ENCODE measurements at regions of chr19 and their contacts with region 1.

Region 1: DNA sequence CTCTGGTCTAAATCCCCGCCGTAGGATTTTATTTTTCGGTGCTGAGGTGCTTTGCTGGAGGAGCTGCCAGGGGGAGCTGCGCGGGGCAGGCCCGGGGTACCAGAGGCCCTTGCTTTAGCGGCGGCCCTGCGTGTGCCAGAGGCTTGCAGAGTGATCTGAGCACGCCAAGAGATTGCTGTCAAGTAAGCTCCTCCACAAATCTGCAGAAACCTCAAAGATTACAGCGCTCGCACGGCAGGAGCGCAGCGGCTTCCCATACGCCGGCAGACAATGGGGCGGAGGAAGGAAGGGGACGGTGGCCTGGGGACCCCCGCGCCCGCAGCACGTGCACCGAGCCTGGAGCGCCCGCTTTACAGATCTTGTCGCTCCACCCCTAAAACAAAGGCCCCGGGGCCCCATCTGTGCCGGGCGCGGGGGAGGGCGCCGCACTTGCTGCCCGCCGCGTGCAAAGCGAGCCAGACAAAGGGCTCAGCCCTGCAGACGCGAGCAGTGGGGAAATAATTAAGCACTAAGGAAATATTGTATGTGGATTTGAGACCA is 9.1 kb upstream of the C19orf12 start:
- H3K4me3 ChIP-seq: no peak overlapping the region
- H3K27ac ChIP-seq: no peak overlapping the region
- H3K4me1 ChIP-seq: no peaks in the 10 kb centered on the region; the same call in 1 of the 2 replicates
- CTCF ChIP-seq: no peak

Region 2: DNA sequence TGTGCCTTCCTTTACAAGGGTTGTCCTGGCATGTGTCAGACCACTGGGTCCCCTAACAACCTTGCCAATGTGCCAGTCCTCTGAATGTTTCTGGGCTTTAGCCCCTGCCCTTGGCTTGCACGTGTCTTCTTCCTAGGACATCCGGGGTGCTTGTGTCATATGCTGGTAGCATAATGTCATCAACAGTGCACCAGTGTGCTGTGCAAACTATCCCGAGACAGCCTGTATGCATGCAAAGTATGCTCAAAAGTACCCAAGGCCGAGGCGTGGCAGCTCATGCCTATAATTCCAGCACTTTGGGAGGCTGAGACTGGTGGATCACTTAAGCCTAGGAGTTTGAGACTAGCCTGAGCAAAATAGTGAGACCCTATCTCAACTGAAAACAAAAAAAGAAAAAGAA is 11.6 kb after region 1 on chr19:
- CTCF ChIA-PET with region 1: interaction called, 22 read pairs
- POLR2A ChIA-PET with region 1: no interaction called
- H3K4me3 ChIP-seq: no peak overlapping the region
- H3K27ac ChIP-seq: no peak overlapping the region
- H3K4me1 ChIP-seq: no peaks in the 10 kb centered on the region
- CTCF ChIP-seq: no peak

Region 3: GRCh38 chr19:29887442-29887855 is 163.3 kb after region 1 on chr19:
- CTCF ChIA-PET with region 1: interaction called, 13 read pairs
- POLR2A ChIA-PET with region 1: no interaction called
- H3K4me3 ChIP-seq: no peak overlapping the region
- H3K27ac ChIP-seq: no peak overlapping the region
- H3K4me1 ChIP-seq: no peaks in the 10 kb centered on the region
- CTCF ChIP-seq: peak; percentile 56

Measured in HEK293 (cell line).